SK-N-SH (cell line): ENCODE measurements at regions of chr19 and their contacts with region 1.

Region 1: DNA sequence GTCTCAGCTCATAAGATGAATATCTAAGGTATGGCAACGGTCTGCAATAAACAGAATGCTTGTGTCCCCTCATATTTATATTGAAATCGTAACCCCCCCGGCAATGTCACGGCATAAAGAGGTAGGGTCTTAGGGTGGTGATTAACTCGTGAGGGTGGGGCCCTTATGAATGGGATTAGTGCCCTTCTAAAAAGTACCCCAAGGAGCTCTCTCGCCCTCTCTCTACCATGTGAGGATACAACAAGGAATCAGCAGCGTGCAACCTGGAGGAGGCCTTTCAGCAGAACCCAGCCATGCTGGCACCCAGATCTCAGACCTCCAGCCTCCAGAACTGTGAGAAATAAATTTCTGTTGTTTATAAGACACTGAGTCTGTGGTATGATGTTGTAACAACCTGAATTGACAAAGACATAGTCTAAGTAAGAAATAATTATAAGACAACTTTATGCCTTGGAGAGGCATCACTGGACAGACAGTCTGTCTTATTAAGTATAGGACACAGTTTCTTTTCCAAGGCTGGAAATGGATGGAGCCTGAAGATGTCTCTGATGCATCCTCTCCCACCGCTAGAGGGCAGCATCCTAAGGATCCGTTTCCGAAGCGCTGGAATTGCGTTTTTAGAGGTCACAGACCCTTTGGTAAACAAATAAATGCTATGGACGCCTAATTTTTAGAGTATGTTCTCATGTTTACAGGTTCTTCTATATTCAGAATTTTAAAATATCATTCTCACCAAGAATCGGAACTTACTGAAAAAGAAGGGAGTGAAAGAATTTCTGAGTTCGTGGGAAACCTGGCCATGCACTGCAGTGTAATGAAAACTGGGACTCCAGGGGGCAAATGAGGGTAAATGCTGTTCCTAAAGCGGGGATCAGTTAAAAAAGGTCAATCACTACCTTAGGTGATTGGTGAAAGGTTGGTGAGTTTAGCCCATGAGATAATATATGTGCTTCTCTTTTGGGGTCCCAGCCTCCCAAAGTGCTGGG is 13.3 kb upstream of the LEUTX start:
- DNase-seq: peak; percentile 29
- H3K4me3 ChIP-seq: peak overlapping the region in 1 of 2 experiments; percentile 11; a peak in 1 of 4 replicates
- H3K27ac ChIP-seq: no peak overlapping the region
- H3K4me1 ChIP-seq: no peaks in the 10 kb centered on the region
- H3K27me3 ChIP-seq: peaks cover 19% of the 10 kb centered on the region; the same call in 1 of the 2 replicates
- CTCF ChIP-seq: peak; percentile 90
- EP300 ChIP-seq: no peak
- RAD21 ChIP-seq: no peak

Region 2: GRCh38 chr19:39754971-39755370 is 10.4 kb before region 1 on chr19:
- CTCF ChIA-PET with region 1: interaction called, 13 read pairs
- POLR2A ChIA-PET with region 1: no interaction called
- DNase-seq: no peak
- H3K4me3 ChIP-seq: no peak overlapping the region
- H3K27ac ChIP-seq: no peak overlapping the region
- H3K4me1 ChIP-seq: no peaks in the 10 kb centered on the region
- H3K27me3 ChIP-seq: peaks cover 23% of the 10 kb centered on the region; the same call in 1 of the 2 replicates
- CTCF ChIP-seq: no peak
- EP300 ChIP-seq: no peak
- RAD21 ChIP-seq: no peak

Region 3: GRCh38 chr19:39778763-39779162 is 13.4 kb after region 1 on chr19 and contains the start of gene LEUTX:
- CTCF ChIA-PET with region 1: interaction called, 18 read pairs
- POLR2A ChIA-PET with region 1: no interaction called
- DNase-seq: no peak
- H3K4me3 ChIP-seq: no peak within 1 kb of the TSS
- H3K27ac ChIP-seq: no peak within 1 kb of the TSS
- H3K4me1 ChIP-seq: no peaks in the 10 kb centered on the region
- H3K27me3 ChIP-seq: peaks cover 36% of the 10 kb centered on the region; the same call in 1 of the 2 replicates
- CTCF ChIP-seq: no peak
- EP300 ChIP-seq: no peak
- RAD21 ChIP-seq: no peak
- polyA plus RNA-seq, gene LEUTX: not detected in 2 replicates